HCT116 (cell line): ENCODE measurements at regions of chr16 and their contacts with region 1.

Region 1: DNA sequence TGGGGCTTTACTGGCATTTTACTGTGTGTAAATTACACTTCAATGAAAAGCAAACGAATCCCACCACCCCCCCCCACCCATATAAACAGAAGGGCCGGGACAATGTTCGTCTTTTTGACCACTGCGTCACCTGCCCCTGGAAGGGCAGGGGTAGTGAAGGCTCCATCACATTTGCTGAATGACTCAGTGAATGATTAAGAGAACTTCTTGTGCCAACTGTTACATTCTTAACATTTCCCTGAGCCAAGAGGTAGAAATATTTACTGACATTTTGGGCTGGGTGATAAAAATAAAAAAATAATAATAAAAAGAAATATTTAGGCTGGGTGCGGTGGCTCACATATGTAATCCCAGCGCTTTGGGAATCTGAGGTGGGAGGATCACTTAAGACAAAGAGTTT is 24.1 kb downstream of the C16orf96 start:
- DNase-seq: no peak
- ATAC-seq: no peak
- H3K4me3 ChIP-seq: no peak overlapping the region
- H3K27ac ChIP-seq: no peak overlapping the region
- H3K4me1 ChIP-seq: no peaks in the 10 kb centered on the region; a peak in 1 of 4 replicates
- H3K27me3 ChIP-seq: no peaks in the 10 kb centered on the region
- CTCF ChIP-seq: no peak
- POLR2A ChIP-seq: no peak
- RAD21 ChIP-seq: no peak

Region 2: GRCh38 chr16:4392382-4393239 is 187.6 kb before region 1 on chr16:
- CTCF ChIA-PET with region 1: no interaction called
- POLR2A ChIA-PET with region 1: no interaction called
- RAD21 ChIA-PET with region 1: no interaction called
- intact Hi-C with region 1: no loop called
- DNase-seq: no peak
- ATAC-seq: no peak
- H3K4me3 ChIP-seq: no peak overlapping the region
- H3K27ac ChIP-seq: no peak overlapping the region
- H3K4me1 ChIP-seq: peaks cover 7 to 14% of the 10 kb centered on the region in 2 experiments; a peak in 3 of 4 replicates
- H3K27me3 ChIP-seq: no peaks in the 10 kb centered on the region
- CTCF ChIP-seq: no peak
- POLR2A ChIP-seq: no peak
- RAD21 ChIP-seq: no peak

Region 3: DNA sequence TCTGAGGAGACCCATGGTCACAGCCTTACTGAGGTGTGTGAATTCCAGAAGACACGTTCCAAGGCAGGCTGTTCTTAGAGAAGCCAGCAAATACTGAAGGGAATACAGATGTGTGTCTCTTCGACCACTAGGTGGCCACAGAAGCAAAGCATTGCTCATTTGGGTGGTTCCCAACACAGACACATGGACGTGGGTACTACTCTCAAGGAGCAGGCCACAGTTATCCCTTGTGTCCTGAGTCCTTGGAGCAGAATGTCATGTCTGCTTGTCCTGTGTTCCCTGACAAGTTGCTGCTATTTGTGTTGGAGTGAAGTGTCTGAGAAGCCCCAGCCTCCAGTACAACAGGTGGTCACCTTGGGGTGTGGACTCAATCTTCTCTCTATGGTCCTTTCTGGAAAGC is 73.8 kb before region 1 on chr16:
- CTCF ChIA-PET with region 1: interaction called, 3 read pairs
- POLR2A ChIA-PET with region 1: no interaction called
- RAD21 ChIA-PET with region 1: no interaction called
- intact Hi-C with region 1: loop called (anchors 1 kb)
- DNase-seq: peak; percentile 39
- ATAC-seq: peak; percentile 93
- H3K4me3 ChIP-seq: no peak overlapping the region
- H3K27ac ChIP-seq: no peak overlapping the region
- H3K4me1 ChIP-seq: peaks cover 0 to 10% of the 10 kb centered on the region in 2 experiments; a peak in 1 of 4 replicates
- H3K27me3 ChIP-seq: no peaks in the 10 kb centered on the region
- CTCF ChIP-seq: peak; percentile 70 to 84 (median 80)
- POLR2A ChIP-seq: no peak
- RAD21 ChIP-seq: peak; percentile 80

Region 4: DNA sequence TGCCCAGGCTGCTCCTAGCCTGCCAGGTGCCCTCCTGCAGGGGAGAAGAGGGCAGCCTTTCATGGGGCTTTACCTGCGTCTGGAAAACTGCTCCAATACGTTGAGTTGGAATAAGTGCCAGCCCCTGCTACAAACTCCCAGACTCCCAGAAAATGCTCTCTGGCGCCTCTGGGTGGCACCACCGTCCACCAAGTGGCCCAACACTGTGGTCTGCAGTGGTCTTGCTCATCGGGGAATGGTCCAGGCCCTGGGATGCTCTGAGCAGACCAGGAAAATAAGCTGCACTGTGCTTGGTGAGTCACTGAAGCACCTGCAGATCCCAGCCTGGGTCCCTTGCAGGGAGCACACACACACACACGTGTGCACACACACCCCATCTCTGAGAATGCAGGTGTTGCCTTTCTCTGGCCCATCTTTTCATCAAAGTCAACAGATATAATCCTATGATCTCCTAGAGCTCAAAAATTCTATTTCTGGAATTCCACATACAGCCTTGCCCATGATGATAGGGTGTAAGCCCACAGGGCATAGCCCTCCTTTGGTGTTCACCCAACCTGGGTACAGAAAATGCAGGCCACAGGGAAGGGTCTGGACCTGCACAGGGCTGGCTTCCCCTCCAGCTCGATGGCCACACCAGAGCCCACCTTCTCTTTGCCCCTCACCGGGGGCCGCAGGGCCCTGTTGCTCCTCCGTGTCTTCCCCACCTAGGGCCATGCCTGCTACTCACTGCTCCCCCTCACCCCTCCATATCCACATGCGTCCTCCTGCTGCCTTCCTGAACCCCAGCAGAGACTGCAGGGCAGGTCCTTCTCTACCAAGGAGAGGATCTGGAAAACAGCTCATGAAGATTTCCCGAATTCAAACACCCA is 62.2 kb before region 1 on chr16:
- CTCF ChIA-PET with region 1: interaction called, 8 read pairs
- POLR2A ChIA-PET with region 1: no interaction called
- RAD21 ChIA-PET with region 1: no interaction called
- intact Hi-C with region 1: loop called (anchors 1 kb)
- DNase-seq: no peak
- ATAC-seq: peak; percentile 84
- H3K4me3 ChIP-seq: no peak overlapping the region
- H3K27ac ChIP-seq: no peak overlapping the region
- H3K4me1 ChIP-seq: no peaks in the 10 kb centered on the region
- H3K27me3 ChIP-seq: no peaks in the 10 kb centered on the region
- CTCF ChIP-seq: peak; percentile 67 to 81 (median 80)
- POLR2A ChIP-seq: no peak
- RAD21 ChIP-seq: peak; percentile 85